ENCODE measurements at regions of chr7 and their contacts with region 1.

Region 1: GRCh38 chr7:151519765-151520418 is at the start of gene RHEB:
- DNase-seq: peak; percentile 94
- ATAC-seq: peak; percentile 86
- H3K4me3 Mint-ChIP-seq: peak within 1 kb of the TSS; percentile 94
- H3K27ac Mint-ChIP-seq: peak within 1 kb of the TSS; percentile 98
- H3K4me1 Mint-ChIP-seq: peaks cover 39% of the 10 kb centered on the region
- H3K27me3 Mint-ChIP-seq: no peaks in the 10 kb centered on the region
- CTCF ChIP-seq: no peak
- total RNA-seq, gene RHEB: 30.5 and 32.8 TPM in 2 replicates

Region 2: DNA sequence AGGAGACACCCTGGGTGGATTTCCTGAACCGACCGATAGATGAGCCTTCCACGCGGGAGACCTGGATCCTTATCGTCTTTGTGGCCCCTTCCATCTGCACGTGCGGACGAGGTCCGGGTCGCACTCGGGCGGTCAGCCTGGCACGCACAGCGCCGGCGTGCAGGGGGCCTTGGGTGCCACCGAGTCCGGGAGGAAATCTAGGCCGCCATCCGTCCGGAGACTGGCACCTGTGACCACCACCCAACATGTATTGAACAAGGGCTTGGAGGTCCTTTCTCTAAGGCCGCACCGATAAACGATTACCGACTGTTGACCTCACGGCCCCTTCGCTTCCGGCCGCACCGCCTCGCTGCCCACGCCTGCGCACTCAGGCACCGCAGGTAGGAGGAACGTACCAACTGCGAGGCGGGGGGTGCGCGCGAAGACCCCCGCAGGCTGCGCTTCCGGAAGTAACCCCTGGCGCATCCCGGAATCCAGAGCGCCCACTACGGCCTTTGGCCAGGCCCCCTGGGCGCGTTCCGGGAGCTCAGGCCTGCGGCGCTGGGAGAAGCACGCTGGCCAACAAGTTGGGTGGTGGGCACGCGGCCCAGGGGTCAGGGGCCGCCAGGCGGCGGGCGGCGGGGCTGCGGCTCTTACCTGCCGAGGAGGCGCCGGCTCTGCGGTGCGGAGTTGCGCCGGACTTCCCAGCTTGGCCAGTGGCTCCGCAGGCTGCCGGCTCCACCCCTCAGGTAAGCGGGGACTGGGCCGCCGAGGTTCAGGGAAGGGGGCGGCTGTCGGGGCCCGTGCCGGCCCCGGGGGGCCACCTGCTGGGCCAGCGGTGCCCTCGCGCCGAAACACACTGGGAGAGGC is 1196.8 kb before region 1 on chr7 and contains the starts of genes ACTR3C and LRRC61:
- CTCF ChIA-PET with region 1: no interaction called
- POLR2A ChIA-PET with region 1: no interaction called
- intact Hi-C with region 1: loop called (anchors 10 kb)
- DNase-seq: peak; percentile 64
- ATAC-seq: peak; percentile 67
- H3K4me3 Mint-ChIP-seq: peak within 1 kb of the TSS; percentile 93
- H3K27ac Mint-ChIP-seq: peak within 1 kb of the TSS; percentile 92
- H3K4me1 Mint-ChIP-seq: peaks cover 54% of the 10 kb centered on the region
- H3K27me3 Mint-ChIP-seq: no peaks in the 10 kb centered on the region
- CTCF ChIP-seq: no peak
- total RNA-seq, gene ACTR3C: 10.1 and 14.3 TPM in 2 replicates
- total RNA-seq, gene LRRC61: 10.7 and 11.0 TPM in 2 replicates

Region 3: GRCh38 chr7:151368136-151368571 is 151.7 kb before region 1 on chr7:
- CTCF ChIA-PET with region 1: no interaction called
- POLR2A ChIA-PET with region 1: interaction called, 11 read pairs
- intact Hi-C with region 1: no loop called
- DNase-seq: peak; percentile 64
- ATAC-seq: peak; percentile 100
- H3K4me3 Mint-ChIP-seq: no peak overlapping the region
- H3K27ac Mint-ChIP-seq: no peak overlapping the region
- H3K4me1 Mint-ChIP-seq: peaks cover 6% of the 10 kb centered on the region
- H3K27me3 Mint-ChIP-seq: no peaks in the 10 kb centered on the region
- CTCF ChIP-seq: peak; percentile 37

Region 4: GRCh38 chr7:151560243-151560642 is 40.4 kb after region 1 on chr7:
- CTCF ChIA-PET with region 1: no interaction called
- POLR2A ChIA-PET with region 1: no interaction called
- intact Hi-C with region 1: loop called (anchors 2 kb)
- DNase-seq: no peak
- ATAC-seq: no peak
- H3K4me3 Mint-ChIP-seq: no peak overlapping the region
- H3K27ac Mint-ChIP-seq: no peak overlapping the region
- H3K4me1 Mint-ChIP-seq: no peaks in the 10 kb centered on the region
- H3K27me3 Mint-ChIP-seq: no peaks in the 10 kb centered on the region
- CTCF ChIP-seq: no peak

Region 5: GRCh38 chr7:151570366-151570915 is 50.5 kb after region 1 on chr7:
- CTCF ChIA-PET with region 1: no interaction called
- POLR2A ChIA-PET with region 1: no interaction called
- intact Hi-C with region 1: no loop called
- DNase-seq: no peak
- ATAC-seq: no peak
- H3K4me3 Mint-ChIP-seq: no peak overlapping the region
- H3K27ac Mint-ChIP-seq: no peak overlapping the region
- H3K4me1 Mint-ChIP-seq: no peaks in the 10 kb centered on the region
- H3K27me3 Mint-ChIP-seq: no peaks in the 10 kb centered on the region
- CTCF ChIP-seq: no peak

Region 6: GRCh38 chr7:151616443-151617213 is 96.7 kb after region 1 on chr7:
- CTCF ChIA-PET with region 1: no interaction called
- POLR2A ChIA-PET with region 1: no interaction called
- intact Hi-C with region 1: no loop called
- DNase-seq: no peak
- ATAC-seq: no peak
- H3K4me3 Mint-ChIP-seq: no peak overlapping the region
- H3K27ac Mint-ChIP-seq: no peak overlapping the region
- H3K4me1 Mint-ChIP-seq: peaks cover 2% of the 10 kb centered on the region
- H3K27me3 Mint-ChIP-seq: no peaks in the 10 kb centered on the region
- CTCF ChIP-seq: no peak

Region 7: DNA sequence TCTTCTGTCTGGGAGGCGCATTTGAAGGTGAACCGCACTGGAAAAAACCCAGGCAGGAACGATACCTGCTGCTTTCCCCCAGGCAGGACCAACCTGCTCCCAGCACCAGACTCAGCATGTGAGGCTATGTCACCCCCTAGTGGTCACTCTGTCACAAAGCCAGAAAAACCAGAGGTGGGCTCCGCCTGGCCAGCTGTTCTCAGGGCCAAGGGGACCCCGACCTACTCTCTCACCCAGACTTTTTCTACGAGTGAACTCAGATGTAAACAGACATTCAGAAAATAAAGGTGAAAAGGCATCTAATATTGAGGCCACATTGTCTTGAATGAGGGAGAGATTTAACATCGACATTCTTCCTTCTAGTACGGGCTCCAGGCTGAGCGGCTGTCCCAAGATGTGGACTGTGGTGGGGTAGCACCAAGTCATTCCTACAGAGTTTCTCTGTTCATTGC is 239.7 kb after region 1 on chr7:
- CTCF ChIA-PET with region 1: interaction called, 3 read pairs
- POLR2A ChIA-PET with region 1: no interaction called
- intact Hi-C with region 1: loop called (anchors 2 kb)
- DNase-seq: no peak
- ATAC-seq: peak; percentile 70
- H3K4me3 Mint-ChIP-seq: no peak overlapping the region
- H3K27ac Mint-ChIP-seq: no peak overlapping the region
- H3K4me1 Mint-ChIP-seq: peaks cover 11% of the 10 kb centered on the region
- H3K27me3 Mint-ChIP-seq: no peaks in the 10 kb centered on the region
- CTCF ChIP-seq: no peak

Region 8: DNA sequence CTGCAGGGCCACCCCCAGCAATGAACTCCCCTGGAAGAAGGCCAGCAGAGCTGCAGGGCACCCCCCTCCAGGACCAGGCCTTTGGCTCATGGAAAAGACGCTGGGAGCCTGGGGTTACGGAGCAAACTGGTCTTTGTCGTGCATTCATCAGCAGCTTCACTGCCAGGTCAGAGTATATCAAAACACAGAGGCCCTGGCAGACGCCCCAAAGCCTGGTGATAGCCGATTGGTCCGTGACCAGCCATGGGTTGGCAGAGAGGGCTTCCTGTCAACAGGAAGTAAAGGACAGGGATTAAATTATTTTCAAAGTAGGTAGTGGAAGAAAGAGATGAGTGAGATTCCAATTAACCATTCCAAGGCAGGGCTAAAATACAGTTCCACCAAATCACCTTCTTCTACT is 348.0 kb after region 1 on chr7:
- CTCF ChIA-PET with region 1: no interaction called
- POLR2A ChIA-PET with region 1: no interaction called
- intact Hi-C with region 1: no loop called
- DNase-seq: no peak
- ATAC-seq: no peak
- H3K4me3 Mint-ChIP-seq: no peak overlapping the region
- H3K27ac Mint-ChIP-seq: no peak overlapping the region
- H3K4me1 Mint-ChIP-seq: peaks cover 40% of the 10 kb centered on the region
- H3K27me3 Mint-ChIP-seq: no peaks in the 10 kb centered on the region
- CTCF ChIP-seq: no peak

Region 9: GRCh38 chr7:152675759-152676636 is 1156.1 kb after region 1 on chr7 and contains the start of gene XRCC2:
- CTCF ChIA-PET with region 1: no interaction called
- POLR2A ChIA-PET with region 1: no interaction called
- intact Hi-C with region 1: loop called (anchors 5 kb)
- DNase-seq: peak; percentile 99
- ATAC-seq: peak; percentile 94
- H3K4me3 Mint-ChIP-seq: peak within 1 kb of the TSS; percentile 94
- H3K27ac Mint-ChIP-seq: peak within 1 kb of the TSS; percentile 93
- H3K4me1 Mint-ChIP-seq: peaks cover 11% of the 10 kb centered on the region
- H3K27me3 Mint-ChIP-seq: no peaks in the 10 kb centered on the region
- CTCF ChIP-seq: no peak
- total RNA-seq, gene XRCC2: 1.7 and 2.3 TPM in 2 replicates

Measured in activated B cell treated with CpG ODN at 0.5 μM for 24 hours (primary cell).